ENCODE measurements at regions of chr1 and their contacts with region 1.

Region 1: GRCh38 chr1:197526736-197527371 is 248.4 kb downstream of the DENND1B start:
- DNase-seq: peak in 4 of 5 donors; percentile 26 to 43 (median 37)
- H3K4me3 ChIP-seq: no peak overlapping the region
- H3K4me3 Mint-ChIP-seq: no peak overlapping the region
- H3K27ac ChIP-seq: no peak overlapping the region
- H3K27ac Mint-ChIP-seq: no peak overlapping the region
- H3K4me1 ChIP-seq: no peaks in the 10 kb centered on the region
- H3K4me1 Mint-ChIP-seq: no peaks in the 10 kb centered on the region
- H3K27me3 ChIP-seq: no peaks in the 10 kb centered on the region
- H3K27me3 Mint-ChIP-seq: no peaks in the 10 kb centered on the region

Region 2: DNA sequence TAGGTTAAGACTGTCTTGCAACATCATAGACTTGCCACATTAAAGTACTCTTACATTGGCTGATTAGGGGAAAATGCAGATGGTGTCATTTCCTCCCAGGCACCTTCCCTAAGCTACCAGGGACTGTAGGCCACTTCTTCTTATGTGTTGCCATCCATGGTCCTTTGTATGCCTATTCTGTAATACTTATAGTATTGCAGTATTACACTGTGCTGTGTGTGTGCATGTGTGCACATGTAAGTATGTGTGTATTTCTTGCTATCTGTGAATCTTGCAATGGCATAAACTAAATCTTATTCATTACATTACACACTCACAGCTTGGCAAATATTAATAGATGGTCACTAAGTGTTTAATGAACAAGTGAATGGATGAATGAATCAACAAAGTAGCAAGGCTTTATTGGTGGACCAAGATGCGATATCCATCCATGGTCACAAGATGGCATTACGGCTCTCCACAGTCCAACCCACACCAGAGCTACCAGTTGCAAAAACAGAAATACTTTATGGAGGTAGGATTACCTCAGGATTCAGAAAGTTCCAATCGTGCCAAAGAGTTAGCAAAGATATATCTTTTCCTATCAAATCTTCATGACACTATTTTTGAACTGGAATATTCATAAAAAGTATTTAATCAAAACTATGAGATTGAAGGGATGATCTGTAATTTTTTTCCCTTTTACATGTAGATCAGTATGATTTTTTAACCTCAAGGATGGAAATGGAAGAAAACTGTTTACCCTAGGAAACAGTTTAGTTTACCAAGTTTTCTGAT is 88.2 kb after region 1 on chr1:
- CTCF ChIA-PET with region 1: no interaction called
- POLR2A ChIA-PET with region 1: interaction called, 3 read pairs
- intact Hi-C with region 1: loop called (anchors 5 kb)
- DNase-seq: peak in 4 of 5 donors; percentile 1 to 23 (median 12)
- H3K4me3 ChIP-seq: no peak overlapping the region
- H3K4me3 Mint-ChIP-seq: no peak overlapping the region
- H3K27ac ChIP-seq: no peak overlapping the region
- H3K27ac Mint-ChIP-seq: no peak overlapping the region
- H3K4me1 ChIP-seq: no peaks in the 10 kb centered on the region
- H3K4me1 Mint-ChIP-seq: no peaks in the 10 kb centered on the region
- H3K27me3 ChIP-seq: no peaks in the 10 kb centered on the region
- H3K27me3 Mint-ChIP-seq: no peaks in the 10 kb centered on the region

Region 3: DNA sequence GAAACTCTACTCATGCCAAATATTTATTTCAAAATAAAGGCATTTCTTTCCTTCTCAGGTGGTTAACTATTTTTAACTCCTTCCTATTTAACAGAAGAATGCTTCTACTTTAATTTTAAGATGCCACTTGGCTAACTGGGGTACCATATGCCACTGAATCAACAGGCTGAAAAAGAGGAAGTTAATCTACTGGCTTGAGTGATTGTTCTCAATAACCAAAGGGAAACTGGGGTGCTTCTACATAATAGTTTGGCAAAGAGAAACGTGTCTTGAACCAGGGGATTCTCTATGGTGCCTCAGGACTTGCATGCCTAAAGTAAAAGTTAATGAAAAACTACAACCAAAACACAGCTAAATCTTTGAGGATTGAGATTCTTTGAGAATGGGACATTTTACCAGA is 105.8 kb after region 1 on chr1:
- CTCF ChIA-PET with region 1: no interaction called
- POLR2A ChIA-PET with region 1: no interaction called
- intact Hi-C with region 1: no loop called
- DNase-seq: no peak
- H3K4me3 ChIP-seq: no peak overlapping the region
- H3K4me3 Mint-ChIP-seq: no peak overlapping the region
- H3K27ac ChIP-seq: no peak overlapping the region
- H3K27ac Mint-ChIP-seq: no peak overlapping the region
- H3K4me1 ChIP-seq: no peaks in the 10 kb centered on the region
- H3K4me1 Mint-ChIP-seq: peaks cover 0 to 7% (median 3%) of the 10 kb centered on the region in 4 donors
- H3K27me3 ChIP-seq: no peaks in the 10 kb centered on the region
- H3K27me3 Mint-ChIP-seq: no peaks in the 10 kb centered on the region

Region 4: GRCh38 chr1:197649188-197649587 is 122.3 kb after region 1 on chr1:
- CTCF ChIA-PET with region 1: no interaction called
- POLR2A ChIA-PET with region 1: no interaction called
- intact Hi-C with region 1: no loop called
- DNase-seq: no peak
- H3K4me3 ChIP-seq: no peak overlapping the region
- H3K4me3 Mint-ChIP-seq: no peak overlapping the region
- H3K27ac ChIP-seq: no peak overlapping the region
- H3K27ac Mint-ChIP-seq: no peak overlapping the region
- H3K4me1 ChIP-seq: no peaks in the 10 kb centered on the region
- H3K4me1 Mint-ChIP-seq: peaks cover 5 to 11% (median 9%) of the 10 kb centered on the region in 4 donors
- H3K27me3 ChIP-seq: no peaks in the 10 kb centered on the region
- H3K27me3 Mint-ChIP-seq: no peaks in the 10 kb centered on the region

Region 5: GRCh38 chr1:197775282-197776262 is 248.7 kb after region 1 on chr1 and contains the start of gene DENND1B:
- CTCF ChIA-PET with region 1: no interaction called
- POLR2A ChIA-PET with region 1: no interaction called
- intact Hi-C with region 1: loop called (anchors 5 kb)
- DNase-seq: peak; percentile 82 to 88 (median 83)
- H3K4me3 ChIP-seq: peak within 1 kb of the TSS; percentile 73 to 84
- H3K4me3 Mint-ChIP-seq: peak within 1 kb of the TSS; percentile 87 to 97 (median 92)
- H3K27ac ChIP-seq: peak within 1 kb of the TSS; percentile 68
- H3K27ac Mint-ChIP-seq: peak within 1 kb of the TSS; percentile 94 to 99 (median 98)
- H3K4me1 ChIP-seq: peaks cover 71% of the 10 kb centered on the region
- H3K4me1 Mint-ChIP-seq: peaks cover 56 to 73% (median 65%) of the 10 kb centered on the region in 4 donors
- H3K27me3 ChIP-seq: no peaks in the 10 kb centered on the region
- H3K27me3 Mint-ChIP-seq: no peaks in the 10 kb centered on the region
- total RNA-seq, gene DENND1B: 25.5 to 26.3 TPM

Region 6: DNA sequence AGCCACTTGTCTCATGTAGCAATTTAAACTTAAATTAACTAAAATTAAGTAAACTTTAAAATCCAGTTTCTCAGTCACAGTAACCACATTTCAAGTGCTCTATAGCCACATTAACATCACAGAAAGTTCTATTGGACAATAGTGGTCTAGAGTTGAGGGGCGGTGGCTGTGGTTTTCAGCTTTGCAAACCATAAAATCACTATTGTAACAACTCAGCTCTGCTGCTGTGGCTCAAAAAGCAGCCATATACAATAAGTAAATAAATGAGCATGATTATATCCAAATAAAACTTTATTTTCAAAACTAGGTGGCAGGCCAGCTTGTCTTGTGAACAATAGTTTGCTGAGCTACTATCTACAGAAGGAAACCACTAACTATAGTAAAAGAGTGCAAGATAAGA is 332.2 kb after region 1 on chr1:
- CTCF ChIA-PET with region 1: no interaction called
- POLR2A ChIA-PET with region 1: no interaction called
- intact Hi-C with region 1: no loop called
- DNase-seq: no peak
- H3K4me3 ChIP-seq: no peak overlapping the region
- H3K4me3 Mint-ChIP-seq: no peak overlapping the region
- H3K27ac ChIP-seq: no peak overlapping the region
- H3K27ac Mint-ChIP-seq: no peak overlapping the region
- H3K4me1 ChIP-seq: no peaks in the 10 kb centered on the region
- H3K4me1 Mint-ChIP-seq: no peaks in the 10 kb centered on the region
- H3K27me3 ChIP-seq: no peaks in the 10 kb centered on the region
- H3K27me3 Mint-ChIP-seq: no peaks in the 10 kb centered on the region

Region 7: GRCh38 chr1:198359024-198359653 is 832.3 kb after region 1 on chr1:
- CTCF ChIA-PET with region 1: no interaction called
- POLR2A ChIA-PET with region 1: no interaction called
- intact Hi-C with region 1: loop called (anchors 5 kb)
- DNase-seq: peak in 4 of 5 donors; percentile 8 to 28 (median 10)
- H3K4me3 ChIP-seq: no peak overlapping the region
- H3K4me3 Mint-ChIP-seq: no peak overlapping the region
- H3K27ac ChIP-seq: no peak overlapping the region
- H3K27ac Mint-ChIP-seq: no peak overlapping the region
- H3K4me1 ChIP-seq: no peaks in the 10 kb centered on the region
- H3K4me1 Mint-ChIP-seq: no peaks in the 10 kb centered on the region
- H3K27me3 ChIP-seq: no peaks in the 10 kb centered on the region
- H3K27me3 Mint-ChIP-seq: peaks cover 2 to 3% of the 10 kb centered on the region in 2 donors

Region 8: GRCh38 chr1:198373376-198373775 is 846.5 kb after region 1 on chr1:
- CTCF ChIA-PET with region 1: no interaction called
- POLR2A ChIA-PET with region 1: no interaction called
- intact Hi-C with region 1: no loop called
- DNase-seq: no peak
- H3K4me3 ChIP-seq: no peak overlapping the region
- H3K4me3 Mint-ChIP-seq: no peak overlapping the region
- H3K27ac ChIP-seq: no peak overlapping the region
- H3K27ac Mint-ChIP-seq: no peak overlapping the region
- H3K4me1 ChIP-seq: no peaks in the 10 kb centered on the region
- H3K4me1 Mint-ChIP-seq: peaks cover 2 to 4% (median 3%) of the 10 kb centered on the region in 4 donors
- H3K27me3 ChIP-seq: no peaks in the 10 kb centered on the region
- H3K27me3 Mint-ChIP-seq: peaks cover 0 to 2% of the 10 kb centered on the region in 2 donors

Region 9: GRCh38 chr1:198465201-198466144 is 938.6 kb after region 1 on chr1:
- CTCF ChIA-PET with region 1: interaction called, 5 read pairs
- POLR2A ChIA-PET with region 1: no interaction called
- intact Hi-C with region 1: loop called (anchors 1 kb)
- DNase-seq: peak in 4 of 5 donors; percentile 30 to 36 (median 36)
- H3K4me3 ChIP-seq: no peak overlapping the region
- H3K4me3 Mint-ChIP-seq: no peak overlapping the region
- H3K27ac ChIP-seq: no peak overlapping the region
- H3K27ac Mint-ChIP-seq: no peak overlapping the region
- H3K4me1 ChIP-seq: no peaks in the 10 kb centered on the region
- H3K4me1 Mint-ChIP-seq: peaks cover 0 to 1% (median 0%) of the 10 kb centered on the region in 4 donors
- H3K27me3 ChIP-seq: no peaks in the 10 kb centered on the region
- H3K27me3 Mint-ChIP-seq: peaks cover 0 to under 1% of the 10 kb centered on the region in 2 donors